ENCODE measurements at regions of chr1 and their contacts with region 1.

Region 1: DNA sequence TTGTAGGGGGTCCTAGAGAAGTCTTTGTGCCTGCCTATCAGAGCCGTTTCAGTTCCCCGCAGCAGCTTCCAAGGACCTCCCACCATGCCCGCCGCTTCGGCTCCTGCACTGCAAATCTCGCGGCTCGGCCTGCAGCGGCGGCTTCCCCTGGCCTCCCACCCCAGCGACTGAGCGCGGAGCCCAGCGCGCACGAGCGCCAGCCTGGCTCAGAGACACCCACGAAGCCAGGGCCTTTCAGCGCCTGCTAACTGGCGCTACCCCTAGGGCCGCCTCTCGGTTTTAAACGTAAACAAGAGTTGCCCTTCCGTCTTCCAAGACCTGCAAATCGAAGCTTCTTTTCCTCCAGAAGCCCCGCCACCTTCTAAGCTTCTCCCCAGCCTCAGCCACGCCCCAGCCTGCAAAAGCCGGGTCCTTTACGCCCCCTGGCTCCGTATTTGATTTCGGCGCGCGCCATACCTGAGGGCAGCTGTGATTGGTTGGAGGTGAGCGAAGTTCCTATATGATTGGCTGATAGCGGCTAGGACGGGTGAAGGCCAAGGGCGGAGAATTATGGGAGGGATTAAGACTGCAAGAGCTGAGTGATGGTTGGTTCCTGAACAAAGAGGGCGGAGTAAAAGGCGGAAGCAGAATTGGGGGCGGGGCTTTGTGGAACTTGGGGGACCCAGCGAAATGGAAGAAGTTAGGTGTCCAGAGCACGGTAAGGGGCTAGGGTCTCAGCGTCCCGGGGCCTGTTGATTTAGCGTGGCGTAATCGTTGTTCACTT is at the start of gene TTF2:
- H3K4me3 Mint-ChIP-seq: no peak within 1 kb of the TSS
- H3K27ac Mint-ChIP-seq: no peak within 1 kb of the TSS
- H3K4me1 Mint-ChIP-seq: peaks cover 15% of the 10 kb centered on the region
- H3K27me3 Mint-ChIP-seq: no peaks in the 10 kb centered on the region

Region 2: GRCh38 chr1:116737020-116737854 is 322.6 kb before region 1 on chr1:
- intact Hi-C with region 1: loop called (anchors 1 kb)
- H3K4me3 Mint-ChIP-seq: no peak overlapping the region
- H3K27ac Mint-ChIP-seq: no peak overlapping the region
- H3K4me1 Mint-ChIP-seq: peaks cover 47% of the 10 kb centered on the region
- H3K27me3 Mint-ChIP-seq: no peaks in the 10 kb centered on the region

Region 3: GRCh38 chr1:116962987-116963639 is 96.7 kb before region 1 on chr1:
- intact Hi-C with region 1: no loop called
- H3K4me3 Mint-ChIP-seq: no peak overlapping the region
- H3K27ac Mint-ChIP-seq: no peak overlapping the region
- H3K4me1 Mint-ChIP-seq: peaks cover 23% of the 10 kb centered on the region
- H3K27me3 Mint-ChIP-seq: peaks cover 3% of the 10 kb centered on the region

Region 4: DNA sequence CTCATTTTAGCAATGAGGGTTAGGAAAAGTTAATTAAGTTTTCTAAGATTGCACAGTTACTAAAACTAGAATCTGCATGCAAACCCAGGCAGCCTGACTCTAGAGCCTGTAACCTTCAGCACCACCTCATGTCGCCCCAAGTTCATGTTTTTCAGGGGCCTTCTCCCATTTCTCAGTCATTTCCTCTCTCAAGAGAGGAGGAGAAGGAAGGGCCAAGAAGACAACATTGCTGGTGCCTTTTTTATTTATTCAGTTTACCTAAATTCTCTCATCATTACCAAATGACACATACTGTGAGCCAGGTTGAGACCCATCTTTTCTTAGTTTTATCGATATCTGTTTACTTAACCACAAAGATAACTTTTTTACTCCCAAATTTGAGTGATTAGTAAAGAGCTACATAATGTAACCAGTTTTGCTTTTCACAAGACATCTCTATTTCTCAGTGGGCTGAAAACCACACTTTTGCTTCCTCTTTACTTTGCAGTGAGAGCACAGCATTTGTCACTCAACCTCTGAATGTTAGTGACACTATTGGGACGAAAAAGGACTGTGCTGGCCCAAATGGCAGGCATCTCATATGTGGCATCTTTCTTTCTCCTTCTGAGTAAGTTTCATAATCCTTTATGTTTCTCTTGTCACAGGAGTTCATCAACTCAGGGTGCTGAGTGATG is 58.5 kb before region 1 on chr1 and contains the start of gene CD101:
- intact Hi-C with region 1: no loop called
- H3K4me3 Mint-ChIP-seq: no peak within 1 kb of the TSS
- H3K27ac Mint-ChIP-seq: peak within 1 kb of the TSS; percentile 82
- H3K4me1 Mint-ChIP-seq: peaks cover 87% of the 10 kb centered on the region
- H3K27me3 Mint-ChIP-seq: no peaks in the 10 kb centered on the region

Region 5: GRCh38 chr1:117026361-117026760 is 33.5 kb before region 1 on chr1:
- intact Hi-C with region 1: no loop called
- H3K4me3 Mint-ChIP-seq: no peak overlapping the region
- H3K27ac Mint-ChIP-seq: no peak overlapping the region
- H3K4me1 Mint-ChIP-seq: peaks cover 15% of the 10 kb centered on the region
- H3K27me3 Mint-ChIP-seq: peaks cover 1% of the 10 kb centered on the region

Region 6: DNA sequence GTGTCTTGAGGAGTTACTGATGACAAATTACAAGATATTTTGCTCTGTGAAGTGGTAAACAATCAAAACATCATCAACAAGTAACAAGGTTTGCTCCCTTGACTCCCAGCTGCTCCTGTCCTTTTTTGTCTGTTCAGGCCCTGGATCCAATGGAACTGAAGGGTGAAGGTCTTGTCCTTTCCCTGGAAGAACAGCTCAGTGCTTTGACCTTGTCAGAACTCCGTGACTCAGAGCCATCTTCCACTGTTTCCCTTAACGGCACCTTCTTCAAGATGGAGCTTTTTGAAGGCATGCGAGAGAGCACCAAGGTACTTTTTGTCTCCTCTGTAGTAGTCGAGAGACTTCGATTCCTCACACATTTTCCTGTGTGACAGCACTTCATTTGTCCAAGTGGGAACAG is 32.7 kb after region 1 on chr1:
- intact Hi-C with region 1: no loop called
- H3K4me3 Mint-ChIP-seq: no peak overlapping the region
- H3K27ac Mint-ChIP-seq: no peak overlapping the region
- H3K4me1 Mint-ChIP-seq: no peaks in the 10 kb centered on the region
- H3K27me3 Mint-ChIP-seq: no peaks in the 10 kb centered on the region

Region 7: GRCh38 chr1:117121776-117122697 is 62.2 kb after region 1 on chr1:
- intact Hi-C with region 1: loop called (anchors 2 kb)
- H3K4me3 Mint-ChIP-seq: peak overlapping the region; percentile 79
- H3K27ac Mint-ChIP-seq: peak overlapping the region; percentile 85
- H3K4me1 Mint-ChIP-seq: peaks cover 9% of the 10 kb centered on the region
- H3K27me3 Mint-ChIP-seq: peaks cover 13% of the 10 kb centered on the region

Measured in dendritic cell treated with granulocyte-macrophage colony-stimulating factor and Interleukin-4, amounts not matched to agents 40 ng/mL and 50 ng/mL, for 4 days (primary cell).